ENCODE measurements at regions of chr21 and their contacts with region 1.

Region 1: GRCh38 chr21:41460578-41461527 is 34.8 kb downstream of the MX1 start:
- DNase-seq: peak; percentile 94
- H3K4me3 ChIP-seq: no peak overlapping the region
- H3K27ac ChIP-seq: no peak overlapping the region
- H3K4me1 ChIP-seq: peaks cover 0 to 12% (median 2%) of the 10 kb centered on the region in 4 donors
- H3K27me3 ChIP-seq: no peaks in the 10 kb centered on the region
- CTCF ChIP-seq: peak; percentile 81 to 88 (median 83)
- EP300 ChIP-seq: no peak
- POLR2A ChIP-seq: no peak

Region 2: DNA sequence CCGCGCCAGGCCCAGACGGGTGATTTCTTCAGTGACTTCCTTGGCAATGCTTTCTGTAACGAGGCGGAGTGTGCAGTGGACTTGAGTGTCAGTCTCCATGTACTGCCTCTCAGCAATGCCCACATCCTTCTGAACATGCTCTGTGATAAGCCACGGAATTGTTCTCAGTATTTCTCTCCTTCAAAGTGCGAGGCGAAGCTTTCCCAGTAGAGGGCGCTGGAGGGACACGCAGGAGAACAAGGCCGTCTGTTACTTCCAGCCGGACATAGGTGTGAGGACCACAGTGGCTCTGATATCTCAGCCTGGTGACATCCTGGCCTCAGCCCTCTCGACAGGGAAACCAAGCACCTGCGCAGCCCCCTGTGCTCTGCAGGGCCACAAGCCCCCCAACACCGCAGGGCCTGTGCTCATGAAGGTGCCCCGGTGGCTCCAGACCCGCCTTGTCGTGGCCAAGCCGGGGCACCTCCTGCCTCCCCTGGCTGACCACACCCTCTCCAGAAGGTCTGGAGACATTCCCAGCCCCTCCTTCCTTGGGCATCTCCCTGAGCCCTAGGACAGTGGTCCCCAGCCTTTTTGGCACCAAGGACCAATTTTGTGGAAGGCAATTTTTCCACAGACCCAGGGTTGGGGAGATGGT is 338.9 kb before region 1 on chr21:
- intact Hi-C with region 1: loop called (anchors 5 kb)
- DNase-seq: peak; percentile 97
- H3K4me3 ChIP-seq: no peak overlapping the region
- H3K27ac ChIP-seq: no peak overlapping the region
- H3K4me1 ChIP-seq: peaks cover 0 to 11% (median 4%) of the 10 kb centered on the region in 4 donors
- H3K27me3 ChIP-seq: peaks cover 0 to 12% (median 0%) of the 10 kb centered on the region in 4 donors
- CTCF ChIP-seq: peak; percentile 73 to 94 (median 80)
- EP300 ChIP-seq: no peak
- POLR2A ChIP-seq: no peak

Region 3: DNA sequence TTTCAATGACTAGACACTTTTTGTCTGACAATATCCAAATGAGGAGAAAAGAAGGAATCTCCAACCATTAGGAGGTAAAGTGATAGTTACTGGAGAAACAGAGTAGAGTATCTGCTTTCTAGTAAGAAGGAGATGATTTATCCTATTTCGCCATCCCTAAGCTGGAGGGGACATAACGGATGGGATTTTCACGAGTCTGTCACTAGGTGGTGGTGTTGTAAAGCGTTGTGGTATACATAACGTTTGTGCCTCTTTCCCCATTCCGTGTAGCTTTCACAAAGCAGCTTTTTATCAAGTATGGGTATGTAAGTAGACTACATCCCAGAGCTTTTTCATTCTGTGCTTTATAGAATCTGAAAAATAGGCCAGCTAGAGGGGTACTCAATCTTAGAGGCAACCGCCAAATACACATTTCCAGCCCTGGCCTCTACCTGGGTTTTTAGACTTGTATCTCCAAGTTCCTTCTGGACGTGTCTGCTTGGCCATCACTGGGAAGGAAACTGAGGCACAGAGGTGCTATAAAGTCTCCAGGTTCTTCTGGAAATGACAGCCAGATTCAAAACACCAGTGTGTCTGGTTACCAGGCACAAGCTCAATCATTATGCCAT is 177.5 kb before region 1 on chr21:
- intact Hi-C with region 1: loop called (anchors 2 kb)
- DNase-seq: peak; percentile 91
- H3K4me3 ChIP-seq: no peak overlapping the region
- H3K27ac ChIP-seq: no peak overlapping the region
- H3K4me1 ChIP-seq: peaks cover 0 to 11% (median 2%) of the 10 kb centered on the region in 4 donors
- H3K27me3 ChIP-seq: peaks cover 0 to 9% (median 0%) of the 10 kb centered on the region in 4 donors
- CTCF ChIP-seq: peak; percentile 65 to 80 (median 77)
- EP300 ChIP-seq: no peak
- POLR2A ChIP-seq: no peak